ENCODE measurements at regions of chr2 and their contacts with region 1.

Region 1: DNA sequence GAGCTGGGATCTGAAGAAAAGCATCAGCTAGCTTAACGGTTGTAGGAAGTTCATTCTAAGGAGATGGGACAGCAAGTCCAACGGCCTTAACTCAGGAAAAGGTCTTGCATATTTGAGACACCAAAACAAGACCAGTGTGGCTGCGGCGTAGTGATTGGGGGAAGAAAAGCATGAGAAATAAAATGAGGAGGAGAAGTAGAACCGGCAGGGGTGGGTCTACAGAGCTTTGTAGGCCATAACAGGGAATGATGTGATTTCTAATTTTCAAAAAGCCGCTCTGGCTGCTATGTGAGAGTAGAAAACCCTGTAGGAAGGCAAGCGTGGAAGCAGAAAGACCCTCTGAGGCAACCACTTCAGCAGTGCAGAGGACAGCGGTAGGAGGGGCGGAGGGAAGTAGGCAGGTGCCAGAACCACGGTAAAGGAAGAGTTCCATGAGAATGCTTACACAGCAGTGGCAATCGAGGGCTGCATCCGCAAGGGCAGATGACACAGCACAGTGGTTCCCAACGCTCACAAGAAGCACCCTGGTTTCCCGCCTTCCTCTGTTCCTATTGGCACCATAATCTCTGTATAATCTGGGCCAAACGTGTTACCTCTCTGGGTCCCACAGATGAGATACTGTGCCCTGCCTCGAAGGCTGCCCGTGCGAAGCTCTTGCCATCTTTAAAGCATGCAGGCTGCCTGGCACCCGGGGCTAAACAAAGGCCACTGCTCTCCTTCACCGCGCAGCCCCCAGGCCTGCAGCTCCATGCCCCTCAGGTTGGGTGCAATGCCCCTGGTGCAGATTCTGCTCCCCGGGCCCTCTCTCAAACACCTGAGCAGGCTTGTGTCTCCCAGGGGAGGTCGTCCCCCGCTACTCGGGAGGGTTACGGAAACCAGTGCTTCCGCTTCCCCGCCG is 791 bp downstream of the ANKRD39 start:
- DNase-seq: peak in 1 of 2 donors; percentile 43
- ATAC-seq: peak in 2 of 4 donors; percentile 4 to 20
- H3K4me3 ChIP-seq: peak overlapping the region; percentile 88
- H3K27ac ChIP-seq: peak overlapping the region; percentile 84
- H3K4me1 ChIP-seq: peaks cover 17% of the 10 kb centered on the region
- H3K27me3 ChIP-seq: no peaks in the 10 kb centered on the region
- CTCF ChIP-seq: no peak

Region 2: GRCh38 chr2:96907115-96908041 is 50.4 kb after region 1 on chr2:
- intact Hi-C with region 1: no loop called
- DNase-seq: peak; percentile 79 to 89
- ATAC-seq: peak; percentile 72 to 96 (median 93)
- H3K4me3 ChIP-seq: peak overlapping the region; percentile 28
- H3K27ac ChIP-seq: peak overlapping the region; percentile 60
- H3K4me1 ChIP-seq: peaks cover 9% of the 10 kb centered on the region
- H3K27me3 ChIP-seq: no peaks in the 10 kb centered on the region
- CTCF ChIP-seq: no peak

Region 3: DNA sequence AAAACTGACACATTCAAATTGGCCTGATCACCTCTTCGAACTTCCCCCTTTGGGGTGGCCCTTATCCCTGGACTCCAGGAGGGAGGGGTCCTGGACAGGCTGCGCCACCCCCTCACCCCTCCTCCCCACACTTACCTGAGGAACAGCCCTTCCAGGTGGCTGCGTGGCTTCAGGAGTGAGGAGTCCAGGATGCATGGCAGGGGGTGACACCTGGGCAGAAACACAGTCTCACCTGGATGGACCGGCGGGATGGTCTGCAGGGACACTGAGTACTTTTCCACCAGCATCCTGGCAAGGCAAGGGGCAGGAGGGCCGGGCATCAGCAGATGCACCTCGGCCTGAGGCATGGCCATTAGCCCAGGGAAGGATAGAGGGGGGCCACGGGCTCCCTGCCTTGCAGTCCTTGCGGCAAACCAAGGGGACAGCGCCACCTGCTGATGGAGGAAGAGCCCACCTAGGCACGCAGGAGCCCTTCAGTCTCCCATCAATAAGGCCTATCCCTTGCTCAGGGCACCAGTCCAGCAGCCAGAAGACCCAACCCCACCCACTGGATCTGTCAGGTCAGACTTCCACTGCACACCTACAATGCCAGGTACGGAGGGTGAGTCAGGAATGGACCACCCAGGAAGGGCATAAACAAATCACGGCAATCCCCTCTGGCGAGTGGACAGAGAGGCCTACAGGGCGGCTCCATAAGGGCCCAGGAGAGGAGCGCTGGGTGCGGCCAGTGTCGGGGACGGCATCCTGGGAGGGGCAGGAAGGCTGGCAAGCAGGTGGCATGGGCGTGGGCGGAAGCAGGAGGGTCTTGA is 103.3 kb after region 1 on chr2:
- intact Hi-C with region 1: loop called in 1 of 2 experiments (anchors 1 kb)
- DNase-seq: peak; percentile 88 to 92
- ATAC-seq: peak; percentile 91 to 98 (median 94)
- H3K4me3 ChIP-seq: no peak overlapping the region
- H3K27ac ChIP-seq: no peak overlapping the region
- H3K4me1 ChIP-seq: no peaks in the 10 kb centered on the region
- H3K27me3 ChIP-seq: no peaks in the 10 kb centered on the region
- CTCF ChIP-seq: peak; percentile 90

Measured in psoas muscle (tissue), 8 donors.